ENCODE measurements at regions of chr3 and their contacts with region 1.

Region 1: GRCh38 chr3:15051531-15051930 is 13.6 kb downstream of the MRPS25 start:
- DNase-seq: no peak
- ATAC-seq: peak; percentile 72 to 83 (median 74)
- H3K4me3 ChIP-seq: no peak overlapping the region
- H3K27ac ChIP-seq: no peak overlapping the region
- H3K4me1 ChIP-seq: peaks cover 0 to 17% (median 0%) of the 10 kb centered on the region in 12 donors
- H3K27me3 ChIP-seq: no peaks in the 10 kb centered on the region
- CTCF ChIP-seq: peak in 11 of 12 donors; percentile 15 to 53 (median 39)
- POLR2A ChIP-seq: no peak

Region 2: DNA sequence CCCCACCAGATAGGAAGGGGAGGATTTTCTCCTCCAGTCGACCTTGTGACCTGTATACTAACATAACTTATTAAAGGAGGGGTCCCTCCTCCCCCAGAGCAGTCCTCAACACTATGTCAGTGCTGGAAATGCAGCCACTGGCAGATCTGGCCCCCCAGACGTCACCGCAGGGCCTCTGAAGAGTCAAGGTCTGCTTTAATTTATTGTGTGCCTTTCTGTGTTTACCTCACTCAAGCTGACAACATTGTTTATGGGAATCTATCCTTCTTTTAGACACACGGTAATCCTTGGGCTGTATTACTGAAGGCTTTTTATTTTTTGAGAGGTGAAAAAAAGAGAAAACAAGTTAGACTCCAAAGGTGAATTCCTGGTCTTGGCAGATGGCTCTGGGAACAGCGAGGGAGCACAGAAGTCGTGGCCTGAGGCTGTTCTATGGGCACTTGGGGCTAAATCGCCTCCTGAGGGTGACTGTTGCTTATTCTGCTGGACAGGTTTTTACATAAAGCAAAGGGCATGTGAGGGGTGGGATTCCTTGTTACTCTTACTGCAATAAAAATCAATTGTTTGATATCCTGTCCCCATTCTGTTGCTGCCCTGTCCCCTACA is 117.6 kb before region 1 on chr3:
- intact Hi-C with region 1: loop called in 2 of 10 experiments (anchors 10 kb)
- DNase-seq: no peak
- ATAC-seq: no peak
- H3K4me3 ChIP-seq: no peak overlapping the region
- H3K27ac ChIP-seq: no peak overlapping the region
- H3K4me1 ChIP-seq: peaks cover 0 to 4% (median 0%) of the 10 kb centered on the region in 12 donors
- H3K27me3 ChIP-seq: no peaks in the 10 kb centered on the region
- CTCF ChIP-seq: no peak
- POLR2A ChIP-seq: no peak

Region 3: GRCh38 chr3:14988988-14989394 is 62.5 kb before region 1 on chr3:
- intact Hi-C with region 1: loop called in 1 of 10 experiments (anchors 2 kb)
- DNase-seq: no peak
- ATAC-seq: no peak
- H3K4me3 ChIP-seq: no peak overlapping the region
- H3K27ac ChIP-seq: peak overlapping the region in 1 of 12 donors; percentile 3
- H3K4me1 ChIP-seq: peaks cover 3 to 55% (median 41%) of the 10 kb centered on the region in 12 donors
- H3K27me3 ChIP-seq: no peaks in the 10 kb centered on the region
- CTCF ChIP-seq: no peak
- POLR2A ChIP-seq: no peak

Measured in heart left ventricle (tissue), 16 donors.